PC-9 (cell line): ENCODE measurements at regions of chr3 and their contacts with region 1.

Region 1: DNA sequence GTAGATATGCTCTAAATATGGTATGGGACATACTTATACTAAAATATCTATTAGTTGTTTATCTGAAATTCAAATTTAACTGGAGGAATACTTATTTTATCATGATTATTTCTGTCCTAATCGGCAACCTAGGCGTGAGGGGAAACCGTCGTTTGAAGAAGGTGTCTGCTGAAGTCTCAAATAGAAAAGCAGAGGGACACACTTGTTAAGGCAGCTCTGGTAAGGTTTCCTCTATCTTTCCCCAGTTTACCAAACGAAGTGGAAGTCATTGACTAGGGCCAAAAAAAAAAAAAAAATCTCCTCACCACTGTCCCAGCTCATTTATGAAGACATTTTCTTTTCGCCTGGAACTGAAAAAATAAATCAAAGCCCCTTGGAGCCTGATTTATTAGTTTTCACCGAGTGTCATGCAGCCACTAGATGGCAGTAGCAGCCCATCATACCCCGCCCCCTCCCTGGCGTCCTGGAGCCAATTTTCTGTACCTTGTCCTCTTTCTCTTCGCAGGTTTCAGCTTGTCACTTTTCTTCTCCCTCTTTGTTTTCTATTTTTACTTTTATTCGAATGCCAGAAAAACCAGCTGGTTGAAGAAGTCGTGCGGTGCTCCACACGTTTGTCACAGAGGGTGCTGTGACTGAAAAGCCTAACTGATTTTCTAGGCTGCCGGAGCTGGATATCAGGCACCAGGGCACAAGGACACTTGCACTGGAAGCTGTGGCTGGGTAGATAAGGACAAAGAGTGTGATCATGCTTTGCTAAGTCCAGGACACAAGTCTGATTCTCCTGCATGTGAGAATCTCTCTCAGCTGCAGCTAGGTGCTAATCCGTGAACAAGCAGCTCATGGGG is 238.7 kb downstream of the ZPLD1 start:
- DNase-seq: peak; percentile 46 to 78
- H3K4me3 ChIP-seq: peak overlapping the region; percentile 6; the same call in 1 of the 2 replicates
- H3K27ac ChIP-seq: no peak overlapping the region
- H3K4me1 ChIP-seq: no peaks in the 10 kb centered on the region
- H3K27me3 ChIP-seq: no peaks in the 10 kb centered on the region
- CTCF ChIP-seq: peak; percentile 99

Region 2: GRCh38 chr3:102745882-102746281 is 72.4 kb after region 1 on chr3:
- CTCF ChIA-PET with region 1: interaction called, 10 read pairs
- POLR2A ChIA-PET with region 1: no interaction called
- intact Hi-C with region 1: no loop called
- DNase-seq: no peak
- H3K4me3 ChIP-seq: no peak overlapping the region
- H3K27ac ChIP-seq: no peak overlapping the region
- H3K4me1 ChIP-seq: no peaks in the 10 kb centered on the region
- H3K27me3 ChIP-seq: no peaks in the 10 kb centered on the region
- CTCF ChIP-seq: peak; percentile 48; the same call in 1 of the 2 replicates

Region 3: DNA sequence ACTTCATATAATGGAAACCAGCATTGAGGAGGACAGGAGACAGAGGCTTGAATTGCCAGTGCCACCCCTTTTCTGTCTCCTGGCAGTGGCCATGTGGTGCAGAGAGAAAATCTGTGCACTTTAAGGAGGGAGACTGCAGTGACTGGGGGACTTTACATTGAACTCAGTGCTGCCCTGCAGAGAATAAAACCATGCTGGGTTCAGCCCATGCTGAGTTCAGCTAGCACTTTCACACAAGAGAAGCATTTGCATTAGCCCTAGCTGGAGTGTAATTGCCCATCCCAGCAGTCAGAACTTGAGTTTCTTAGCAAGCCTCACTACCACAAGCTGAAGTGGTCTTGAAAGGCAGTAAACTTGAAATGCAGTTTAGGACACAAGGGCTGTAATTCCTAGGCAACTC is 438.8 kb after region 1 on chr3:
- CTCF ChIA-PET with region 1: no interaction called
- POLR2A ChIA-PET with region 1: no interaction called
- intact Hi-C with region 1: loop called (anchors 10 kb)
- DNase-seq: no peak
- H3K4me3 ChIP-seq: no peak overlapping the region
- H3K27ac ChIP-seq: no peak overlapping the region
- H3K4me1 ChIP-seq: no peaks in the 10 kb centered on the region
- H3K27me3 ChIP-seq: no peaks in the 10 kb centered on the region
- CTCF ChIP-seq: no peak

Region 4: GRCh38 chr3:103295974-103296570 is 622.6 kb after region 1 on chr3:
- CTCF ChIA-PET with region 1: no interaction called
- POLR2A ChIA-PET with region 1: no interaction called
- intact Hi-C with region 1: loop called (anchors 2 kb)
- DNase-seq: no peak
- H3K4me3 ChIP-seq: no peak overlapping the region
- H3K27ac ChIP-seq: no peak overlapping the region
- H3K4me1 ChIP-seq: no peaks in the 10 kb centered on the region
- H3K27me3 ChIP-seq: no peaks in the 10 kb centered on the region
- CTCF ChIP-seq: peak; percentile 67

Region 5: DNA sequence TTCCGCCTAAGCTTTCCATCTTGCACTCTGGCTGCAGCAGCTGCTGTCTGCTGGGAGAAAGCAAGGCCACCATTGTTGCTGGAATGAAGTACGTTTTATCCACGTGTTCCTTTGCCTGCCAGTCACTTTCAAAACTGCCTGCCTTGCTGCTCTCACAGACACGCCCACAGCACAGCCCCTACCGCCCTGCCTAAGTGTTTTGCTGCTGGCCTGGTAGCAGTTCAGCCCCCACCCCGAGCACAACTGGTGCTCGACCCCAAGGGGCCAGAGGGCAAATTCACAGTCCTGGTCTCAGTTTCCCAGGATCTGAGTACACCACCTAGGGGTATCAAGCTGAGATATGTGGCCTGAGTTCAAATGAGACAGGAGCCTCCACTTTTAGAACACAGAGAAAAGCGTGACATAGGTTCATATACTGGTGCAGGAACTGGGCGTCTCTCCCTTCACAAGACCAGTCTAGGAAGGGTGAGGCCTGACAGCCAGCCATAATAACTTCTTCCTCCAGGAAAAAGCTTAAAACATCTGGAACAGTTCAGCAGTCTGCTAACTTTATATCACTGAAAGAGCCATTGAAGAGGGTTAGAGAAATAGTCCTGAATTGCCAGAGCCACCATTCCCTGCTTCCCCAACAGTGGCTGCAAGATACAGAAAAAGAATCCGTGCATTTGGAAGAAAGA is 773.6 kb after region 1 on chr3:
- CTCF ChIA-PET with region 1: no interaction called
- POLR2A ChIA-PET with region 1: interaction called, 10 read pairs
- intact Hi-C with region 1: no loop called
- DNase-seq: no peak
- H3K4me3 ChIP-seq: no peak overlapping the region
- H3K27ac ChIP-seq: no peak overlapping the region
- H3K4me1 ChIP-seq: no peaks in the 10 kb centered on the region
- H3K27me3 ChIP-seq: no peaks in the 10 kb centered on the region
- CTCF ChIP-seq: no peak